Adrenal gland (tissue), 19 donors: ENCODE measurements at regions of chr4 and their contacts with region 1.

Region 1: DNA sequence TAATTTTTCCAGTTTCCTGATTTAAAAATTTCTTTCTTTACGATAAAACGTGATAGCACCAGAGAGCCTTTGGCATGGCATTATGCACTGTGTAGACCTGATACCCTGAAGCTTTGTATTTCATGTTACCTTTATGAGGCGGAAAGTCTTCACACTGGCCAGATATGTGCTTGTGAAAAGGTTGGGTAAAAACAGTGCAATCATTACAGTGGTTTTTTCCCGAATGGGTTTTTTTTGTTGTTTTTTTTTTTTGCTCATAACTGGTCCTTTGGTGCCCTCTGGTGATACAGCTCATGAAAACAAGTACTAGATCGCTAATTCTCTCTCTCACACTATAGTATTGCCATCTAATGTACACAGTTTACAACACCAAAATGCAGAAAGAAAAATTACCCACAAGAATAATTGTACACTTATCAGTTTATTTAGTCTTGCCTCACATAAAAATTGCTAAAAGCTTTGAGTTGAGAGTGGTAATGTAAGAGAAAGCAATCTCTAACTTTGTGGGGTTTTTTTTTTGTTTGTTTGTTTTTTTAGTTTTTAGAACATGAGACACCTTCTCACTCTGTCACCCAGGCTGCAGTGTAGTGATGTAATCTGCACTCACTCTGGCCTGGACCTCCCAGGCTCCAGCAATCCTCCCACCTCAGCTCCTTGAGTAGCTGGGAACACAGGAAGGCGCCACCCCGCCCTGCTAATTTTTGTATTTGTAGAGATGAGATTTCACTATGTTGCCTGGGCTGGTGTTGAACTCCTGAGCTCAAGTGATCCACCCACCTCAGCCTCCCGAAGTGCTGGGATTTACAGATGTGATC is 21.3 kb downstream of the SPCS3 start:
- DNase-seq: peak in 1 of 7 donors; percentile 21
- H3K4me3 ChIP-seq: no peak overlapping the region
- H3K27ac ChIP-seq: no peak overlapping the region
- H3K4me1 ChIP-seq: no peaks in the 10 kb centered on the region
- H3K27me3 ChIP-seq: no peaks in the 10 kb centered on the region
- CTCF ChIP-seq: peak in 5 of 6 experiments; percentile 17 to 66 (median 48)
- POLR2A ChIP-seq: no peak

Region 2: GRCh38 chr4:175944126-175944910 is 396.8 kb before region 1 on chr4:
- intact Hi-C with region 1: loop called in 1 of 2 experiments (anchors 5 kb)
- DNase-seq: no peak
- H3K4me3 ChIP-seq: no peak overlapping the region
- H3K27ac ChIP-seq: no peak overlapping the region
- H3K4me1 ChIP-seq: no peaks in the 10 kb centered on the region
- H3K27me3 ChIP-seq: no peaks in the 10 kb centered on the region
- CTCF ChIP-seq: no peak
- POLR2A ChIP-seq: no peak

Region 3: GRCh38 chr4:176034499-176034898 is 306.6 kb before region 1 on chr4:
- intact Hi-C with region 1: loop called in 1 of 2 experiments (anchors 5 kb)
- DNase-seq: peak in 4 of 7 donors; percentile 11 to 30 (median 27)
- H3K4me3 ChIP-seq: no peak overlapping the region
- H3K27ac ChIP-seq: no peak overlapping the region
- H3K4me1 ChIP-seq: no peaks in the 10 kb centered on the region
- H3K27me3 ChIP-seq: no peaks in the 10 kb centered on the region
- CTCF ChIP-seq: peak in 5 of 6 experiments; percentile 21 to 62 (median 49)
- POLR2A ChIP-seq: no peak